ENCODE measurements at regions of chr2 and their contacts with region 1.

Region 1: GRCh38 chr2:85595301-85596025 is at the start of gene RNF181:
- DNase-seq: peak; percentile 94
- ATAC-seq: peak; percentile 100
- H3K4me3 Mint-ChIP-seq: peak within 1 kb of the TSS; percentile 100
- H3K27ac Mint-ChIP-seq: peak within 1 kb of the TSS; percentile 99
- H3K4me1 Mint-ChIP-seq: peaks cover 28% of the 10 kb centered on the region
- H3K27me3 Mint-ChIP-seq: no peaks in the 10 kb centered on the region
- total RNA-seq, gene RNF181: 113 to 140 TPM

Region 2: GRCh38 chr2:85354286-85355072 is 241.0 kb before region 1 on chr2 and contains the starts of genes ELMOD3 and RETSAT:
- CTCF ChIA-PET with region 1: no interaction called
- POLR2A ChIA-PET with region 1: interaction called, 4 read pairs
- intact Hi-C with region 1: loop called in 1 of 2 experiments (anchors 1 kb)
- DNase-seq: peak; percentile 98
- ATAC-seq: peak; percentile 100
- H3K4me3 Mint-ChIP-seq: peak within 1 kb of the TSS; percentile 89
- H3K27ac Mint-ChIP-seq: peak within 1 kb of the TSS; percentile 99
- H3K4me1 Mint-ChIP-seq: peaks cover 34% of the 10 kb centered on the region
- H3K27me3 Mint-ChIP-seq: no peaks in the 10 kb centered on the region
- total RNA-seq, gene ELMOD3: 11.2 to 12.9 TPM
- total RNA-seq, gene RETSAT: 18.1 to 18.7 TPM

Region 3: DNA sequence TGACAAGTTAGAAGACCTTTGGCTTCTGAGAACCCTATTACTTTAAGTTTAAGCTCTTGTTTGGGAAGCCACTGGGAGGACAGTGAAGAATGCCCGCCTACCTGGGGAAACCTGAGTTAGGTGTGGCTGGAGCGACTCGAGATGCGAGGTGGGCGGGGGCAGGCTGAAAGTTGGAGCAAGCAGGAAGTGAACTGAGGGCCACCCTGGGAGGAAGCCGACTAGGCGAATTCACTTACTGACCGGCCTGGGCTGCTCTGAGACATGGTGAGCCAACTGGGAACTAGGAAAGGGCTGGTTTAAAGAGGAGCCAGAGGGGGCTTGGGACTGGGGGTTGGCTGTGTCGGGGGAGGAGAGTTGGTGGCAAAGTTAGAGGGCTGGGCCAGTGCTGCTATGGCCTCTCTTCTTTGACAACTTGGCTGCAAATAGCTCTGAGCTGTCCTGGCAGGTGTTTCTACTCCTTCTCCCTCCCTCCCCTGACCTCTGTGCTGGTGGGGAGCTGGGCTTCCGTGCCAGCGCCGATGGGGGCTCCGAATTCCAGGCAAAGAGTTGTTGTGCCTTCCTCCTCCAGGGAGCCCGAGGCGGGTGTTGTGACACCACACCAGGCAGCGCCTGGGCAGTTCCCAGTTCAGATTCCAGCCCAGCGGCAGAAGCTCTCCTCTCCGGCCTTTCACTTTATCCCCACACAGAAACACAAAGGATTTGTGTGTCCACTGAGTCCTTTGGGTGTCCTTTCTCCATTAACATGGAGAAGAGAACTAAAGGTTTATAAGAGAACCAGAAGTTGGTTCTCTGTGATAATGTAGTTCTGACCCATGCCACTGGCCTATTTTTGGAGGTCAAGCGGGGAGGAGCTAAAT is 17.8 kb before region 1 on chr2 and contains the start of gene VAMP8:
- CTCF ChIA-PET with region 1: interaction called, 8 read pairs
- POLR2A ChIA-PET with region 1: no interaction called
- intact Hi-C with region 1: loop called (anchors 1 kb)
- DNase-seq: peak; percentile 81
- ATAC-seq: peak; percentile 88
- H3K4me3 Mint-ChIP-seq: peak within 1 kb of the TSS; percentile 98
- H3K27ac Mint-ChIP-seq: peak within 1 kb of the TSS; percentile 91
- H3K4me1 Mint-ChIP-seq: peaks cover 25% of the 10 kb centered on the region
- H3K27me3 Mint-ChIP-seq: no peaks in the 10 kb centered on the region
- total RNA-seq, gene VAMP8: 98.3 to 106 TPM